ENCODE measurements at regions of chr4 and their contacts with region 1.

Region 1: GRCh38 chr4:80610845-80611677 is 275.5 kb downstream of the CFAP299 start:
- DNase-seq: peak; percentile 99
- H3K4me3 ChIP-seq: peak overlapping the region; percentile 40
- H3K27ac ChIP-seq: peak overlapping the region; percentile 99
- H3K4me1 ChIP-seq: peaks cover 69% of the 10 kb centered on the region
- CTCF ChIP-seq: no peak

Region 2: DNA sequence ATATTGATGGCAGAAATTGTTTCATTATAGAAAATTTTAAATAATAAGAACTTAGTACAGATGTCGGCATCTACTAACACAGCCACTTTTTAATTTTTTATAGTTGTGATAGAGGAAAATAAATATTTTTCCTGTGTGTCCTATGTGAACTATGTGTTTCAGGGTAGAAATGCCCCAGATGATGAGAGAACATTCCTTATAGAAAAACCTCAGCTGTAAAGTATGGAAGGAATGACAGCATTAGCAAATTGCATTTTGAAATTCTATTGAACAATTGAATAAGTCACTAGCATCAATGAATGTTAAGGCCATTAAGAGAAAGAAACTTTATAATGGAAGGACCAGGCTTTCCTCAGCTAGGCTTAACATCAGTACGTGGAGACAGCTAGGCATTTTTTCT is 126.3 kb before region 1 on chr4:
- CTCF ChIA-PET with region 1: no interaction called
- POLR2A ChIA-PET with region 1: interaction called, 4 read pairs
- intact Hi-C with region 1: loop called (anchors 2 kb)
- DNase-seq: no peak
- H3K4me3 ChIP-seq: no peak overlapping the region
- H3K27ac ChIP-seq: no peak overlapping the region
- H3K4me1 ChIP-seq: peaks cover 42% of the 10 kb centered on the region
- CTCF ChIP-seq: no peak

Region 3: DNA sequence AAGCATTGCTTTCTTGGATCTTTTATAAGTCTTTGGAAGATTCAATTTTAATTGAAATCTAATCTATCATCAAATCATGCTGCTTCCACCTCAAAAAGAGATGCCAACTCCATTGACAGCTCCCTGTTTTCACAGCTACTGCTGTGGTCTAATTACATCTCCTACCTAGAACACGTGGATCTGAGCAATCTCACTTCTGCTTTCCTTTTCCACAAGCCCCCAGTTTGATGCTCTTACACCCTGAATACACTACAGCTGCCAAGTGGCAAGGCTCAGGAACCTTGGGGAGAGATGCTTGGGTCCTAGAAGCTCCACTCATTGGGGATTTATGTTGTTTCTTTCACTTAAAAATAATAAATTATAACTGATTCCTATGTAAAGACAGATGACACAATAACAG is 103.6 kb before region 1 on chr4:
- CTCF ChIA-PET with region 1: no interaction called
- POLR2A ChIA-PET with region 1: interaction called, 5 read pairs
- intact Hi-C with region 1: loop called (anchors 5 kb)
- DNase-seq: peak; percentile 85
- H3K4me3 ChIP-seq: no peak overlapping the region
- H3K27ac ChIP-seq: peak overlapping the region; percentile 55
- H3K4me1 ChIP-seq: peaks cover 37% of the 10 kb centered on the region
- CTCF ChIP-seq: no peak

Region 4: GRCh38 chr4:80876810-80877209 is 265.7 kb after region 1 on chr4:
- CTCF ChIA-PET with region 1: no interaction called
- POLR2A ChIA-PET with region 1: interaction called, 39 read pairs
- intact Hi-C with region 1: loop called (anchors 1 kb)
- DNase-seq: peak; percentile 67
- H3K4me3 ChIP-seq: peak overlapping the region; percentile 4
- H3K27ac ChIP-seq: peak overlapping the region; percentile 98
- H3K4me1 ChIP-seq: peaks cover 58% of the 10 kb centered on the region
- CTCF ChIP-seq: no peak

Region 5: GRCh38 chr4:80989921-80990544 is 379.0 kb after region 1 on chr4:
- CTCF ChIA-PET with region 1: interaction called, 5 read pairs
- POLR2A ChIA-PET with region 1: interaction called, 50 read pairs
- intact Hi-C with region 1: loop called (anchors 1 kb)
- DNase-seq: peak; percentile 87
- H3K4me3 ChIP-seq: peak overlapping the region; percentile 5
- H3K27ac ChIP-seq: peak overlapping the region; percentile 97
- H3K4me1 ChIP-seq: peaks cover 45% of the 10 kb centered on the region
- CTCF ChIP-seq: peak; percentile 93

Region 6: DNA sequence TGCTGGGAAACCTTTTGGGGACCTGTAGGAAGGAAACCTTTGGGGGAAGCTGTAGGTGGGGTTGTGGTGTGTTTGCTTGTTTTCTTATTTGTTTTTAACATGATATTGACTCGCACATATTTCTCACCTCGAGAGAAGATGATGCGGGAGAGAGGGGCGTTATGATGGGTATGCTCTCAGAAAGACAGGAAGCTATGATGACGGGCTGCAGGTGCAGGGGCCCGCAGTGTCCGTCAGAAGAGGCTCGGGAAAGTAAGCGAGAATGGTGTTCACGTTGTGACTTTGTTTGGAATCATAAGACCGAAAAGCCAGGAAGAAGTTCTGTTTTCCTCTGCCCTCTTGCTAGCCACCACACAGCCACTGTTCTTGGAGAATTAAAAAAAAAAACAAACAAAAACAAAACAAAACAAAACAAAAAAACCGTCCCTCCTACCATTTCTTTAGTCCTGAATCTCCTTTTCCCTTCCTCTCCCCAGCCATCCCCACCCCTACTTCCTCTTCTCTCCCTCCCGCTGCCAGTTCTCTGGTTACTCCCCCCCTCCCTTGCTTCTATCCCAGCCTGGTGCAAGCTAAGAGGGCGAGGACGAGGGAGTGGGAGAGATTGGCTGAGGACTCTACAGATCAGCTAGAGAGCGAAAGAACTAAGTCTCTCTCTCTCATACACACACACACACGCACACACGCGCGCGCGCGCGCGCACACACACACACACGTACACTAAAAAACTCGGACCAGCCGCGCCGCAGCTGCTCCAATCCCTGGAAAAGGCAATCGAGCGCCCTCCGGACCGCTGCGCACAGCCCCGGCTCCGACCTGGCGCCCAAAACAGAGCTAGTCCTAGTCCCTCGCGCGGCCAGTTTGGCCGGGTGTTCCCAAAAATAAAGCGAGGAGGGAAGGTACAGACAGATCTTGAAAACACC is 419.3 kb after region 1 on chr4 and contains the start of gene BMP3:
- CTCF ChIA-PET with region 1: interaction called, 4 read pairs
- POLR2A ChIA-PET with region 1: interaction called, 271 read pairs
- intact Hi-C with region 1: loop called (anchors 1 kb)
- DNase-seq: peak; percentile 82
- H3K4me3 ChIP-seq: peak within 1 kb of the TSS; percentile 79
- H3K27ac ChIP-seq: peak within 1 kb of the TSS; percentile 92
- H3K4me1 ChIP-seq: peaks cover 55% of the 10 kb centered on the region
- CTCF ChIP-seq: no peak
- total RNA-seq, gene BMP3: 40.6 and 45.8 TPM in 2 replicates

Region 7: GRCh38 chr4:81040012-81040659 is 429.1 kb after region 1 on chr4:
- CTCF ChIA-PET with region 1: no interaction called
- POLR2A ChIA-PET with region 1: interaction called, 271 read pairs
- intact Hi-C with region 1: no loop called
- DNase-seq: peak; percentile 82
- H3K4me3 ChIP-seq: peak overlapping the region; percentile 52
- H3K27ac ChIP-seq: peak overlapping the region; percentile 92
- H3K4me1 ChIP-seq: peaks cover 72% of the 10 kb centered on the region
- CTCF ChIP-seq: peak; percentile 96

Measured in OCI-LY7 (cell line).